Right ventricle myocardium inferior (tissue), 1 donor: ENCODE measurements at regions of chr2 and their contacts with region 1.

Region 1: DNA sequence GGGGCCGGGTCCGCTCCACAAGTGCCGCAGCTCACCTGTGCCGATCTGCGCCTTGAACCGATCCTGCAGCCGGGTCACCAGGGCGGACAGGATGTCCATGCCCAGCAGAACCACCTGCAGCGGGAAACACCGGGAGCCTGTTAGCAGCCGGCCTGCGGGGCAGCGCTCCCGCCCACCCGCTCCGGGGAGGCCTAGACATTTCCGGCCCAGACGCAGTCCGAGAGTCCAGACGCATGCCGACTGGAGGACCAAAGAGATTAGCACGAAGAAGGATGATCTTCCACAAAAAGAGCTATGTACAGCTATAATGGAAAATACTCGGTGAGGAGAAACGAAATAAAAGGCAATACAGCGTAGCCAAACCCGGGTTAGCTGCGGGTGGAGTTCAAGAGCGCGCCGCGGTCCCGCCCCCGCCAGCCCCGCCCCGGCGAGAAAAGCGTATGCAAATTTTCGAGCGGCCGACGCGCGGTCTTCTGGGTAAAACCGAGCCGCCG is 421 bp upstream of the RNU4ATAC start:
- DNase-seq: peak; percentile 92
- ATAC-seq: peak; percentile 89

Region 2: DNA sequence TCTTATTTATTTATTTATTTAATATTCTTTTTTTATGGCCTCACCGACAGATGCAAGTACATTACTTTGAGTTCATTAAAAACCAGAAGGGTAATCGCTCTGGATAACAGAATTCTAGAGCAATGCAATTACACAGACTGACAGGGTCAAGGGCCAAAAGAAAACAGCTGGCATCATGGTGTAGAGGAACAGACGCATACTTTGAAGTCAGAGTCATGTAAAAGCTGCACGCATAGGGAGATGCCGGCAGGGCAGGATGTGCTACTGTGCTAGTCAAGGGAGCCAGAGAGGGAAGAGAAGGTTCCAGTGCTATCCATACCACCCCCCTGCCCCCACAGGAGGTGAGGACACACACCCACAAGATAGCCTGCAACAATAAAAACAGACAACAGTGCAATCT is 130.1 kb before region 1 on chr2:
- intact Hi-C with region 1: loop called (anchors 10 kb)
- DNase-seq: no peak
- ATAC-seq: no peak

Region 3: DNA sequence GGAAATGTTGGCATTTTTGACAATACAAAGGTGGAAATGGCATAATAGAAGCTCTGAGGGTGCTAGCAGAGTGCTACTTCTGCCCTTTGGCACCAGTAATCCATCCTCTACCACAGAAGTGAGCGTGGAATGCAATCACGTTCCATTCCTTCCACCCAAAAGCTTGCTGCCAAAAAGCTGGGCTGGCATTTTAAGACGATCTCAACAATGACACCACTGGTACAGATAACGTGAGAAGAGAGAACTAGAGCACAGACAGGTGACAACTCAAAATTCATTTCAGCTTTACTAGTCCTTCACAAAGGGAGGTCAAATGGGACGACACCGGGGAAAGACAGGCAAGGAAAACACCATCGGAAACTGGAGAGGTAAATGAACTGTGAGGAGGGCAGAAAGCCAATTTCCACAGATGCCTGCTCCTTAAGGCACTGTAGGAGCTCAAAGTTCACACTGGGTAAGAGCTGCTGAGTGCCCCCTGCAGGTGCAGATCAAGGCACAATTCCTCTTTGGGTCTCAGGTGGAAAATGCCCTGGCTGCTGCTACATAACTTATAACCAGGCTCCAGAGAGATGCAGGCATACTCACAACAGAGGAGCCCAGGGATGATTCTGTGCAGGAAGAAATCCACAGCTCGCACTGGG is 50.3 kb before region 1 on chr2:
- intact Hi-C with region 1: loop called (anchors 5 kb)
- DNase-seq: no peak
- ATAC-seq: peak; percentile 47

Region 4: GRCh38 chr2:121649596-121650314 is 119.5 kb after region 1 on chr2:
- intact Hi-C with region 1: loop called (anchors 2 kb)
- DNase-seq: peak; percentile 98
- ATAC-seq: peak; percentile 99

Region 5: GRCh38 chr2:121722479-121722878 is 192.2 kb after region 1 on chr2:
- intact Hi-C with region 1: loop called (anchors 2 kb)
- DNase-seq: no peak
- ATAC-seq: peak; percentile 47

Region 6: DNA sequence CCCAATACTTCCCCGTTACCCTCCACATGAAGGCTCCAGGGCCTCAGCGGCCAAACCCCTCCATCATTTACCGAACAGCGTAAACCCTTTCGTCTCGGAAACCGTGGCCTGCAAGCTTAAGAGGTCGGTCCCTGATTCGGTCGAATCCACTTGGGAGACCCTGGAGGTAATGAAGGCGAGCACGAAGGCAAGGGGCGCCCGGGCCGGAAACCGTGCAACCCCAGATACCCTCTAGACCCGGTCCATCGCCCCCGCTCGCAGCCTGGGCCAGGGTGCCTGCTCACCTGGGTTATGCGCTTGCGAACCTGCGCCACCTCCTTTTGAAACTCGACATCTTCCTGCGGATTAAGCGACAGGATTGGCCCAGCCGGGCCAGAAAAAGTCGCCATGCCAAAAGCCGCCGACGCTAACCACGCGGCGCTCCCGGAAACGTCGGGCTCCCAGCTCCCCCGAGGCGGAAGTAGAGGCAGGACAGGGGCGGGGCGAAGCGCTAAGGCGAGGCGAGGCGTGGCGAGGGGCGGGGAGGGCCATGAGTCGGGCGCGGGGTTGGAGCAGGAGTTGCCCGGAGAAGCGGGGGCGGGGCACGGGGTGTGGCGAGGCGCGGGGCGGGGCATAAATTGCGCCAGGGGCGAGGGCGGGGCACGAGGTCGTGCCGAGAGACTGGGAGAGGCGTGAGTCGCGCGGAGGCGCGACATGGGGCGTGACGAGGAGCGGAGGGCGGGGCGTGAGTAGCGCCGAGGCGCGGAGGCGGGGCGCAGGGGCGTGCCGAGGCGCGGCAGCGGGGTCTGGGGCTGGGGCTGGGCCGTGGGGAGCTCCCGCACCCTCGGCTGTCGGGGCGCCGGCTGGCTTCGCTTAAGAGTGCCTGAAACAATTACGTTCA is 206.4 kb after region 1 on chr2 and contains the start of gene NIFK:
- intact Hi-C with region 1: loop called (anchors 5 kb)
- DNase-seq: peak; percentile 100
- ATAC-seq: peak; percentile 99
- total RNA-seq, gene NIFK: 18.3 TPM